Motor neuron (in vitro differentiated cells): ENCODE measurements at regions of chr17 and their contacts with region 1.

Region 1: GRCh38 chr17:13601776-13602551 is at the start of gene HS3ST3A1:
- ATAC-seq: peak; percentile 86 to 91 (median 90)
- H3K4me3 ChIP-seq: peak within 1 kb of the TSS; percentile 47 to 72 (median 58)
- H3K27ac ChIP-seq: no peak within 1 kb of the TSS
- H3K4me1 ChIP-seq: no peaks in the 10 kb centered on the region
- total RNA-seq, gene HS3ST3A1: 2.7 to 50.7 (median 5.3) TPM

Region 2: DNA sequence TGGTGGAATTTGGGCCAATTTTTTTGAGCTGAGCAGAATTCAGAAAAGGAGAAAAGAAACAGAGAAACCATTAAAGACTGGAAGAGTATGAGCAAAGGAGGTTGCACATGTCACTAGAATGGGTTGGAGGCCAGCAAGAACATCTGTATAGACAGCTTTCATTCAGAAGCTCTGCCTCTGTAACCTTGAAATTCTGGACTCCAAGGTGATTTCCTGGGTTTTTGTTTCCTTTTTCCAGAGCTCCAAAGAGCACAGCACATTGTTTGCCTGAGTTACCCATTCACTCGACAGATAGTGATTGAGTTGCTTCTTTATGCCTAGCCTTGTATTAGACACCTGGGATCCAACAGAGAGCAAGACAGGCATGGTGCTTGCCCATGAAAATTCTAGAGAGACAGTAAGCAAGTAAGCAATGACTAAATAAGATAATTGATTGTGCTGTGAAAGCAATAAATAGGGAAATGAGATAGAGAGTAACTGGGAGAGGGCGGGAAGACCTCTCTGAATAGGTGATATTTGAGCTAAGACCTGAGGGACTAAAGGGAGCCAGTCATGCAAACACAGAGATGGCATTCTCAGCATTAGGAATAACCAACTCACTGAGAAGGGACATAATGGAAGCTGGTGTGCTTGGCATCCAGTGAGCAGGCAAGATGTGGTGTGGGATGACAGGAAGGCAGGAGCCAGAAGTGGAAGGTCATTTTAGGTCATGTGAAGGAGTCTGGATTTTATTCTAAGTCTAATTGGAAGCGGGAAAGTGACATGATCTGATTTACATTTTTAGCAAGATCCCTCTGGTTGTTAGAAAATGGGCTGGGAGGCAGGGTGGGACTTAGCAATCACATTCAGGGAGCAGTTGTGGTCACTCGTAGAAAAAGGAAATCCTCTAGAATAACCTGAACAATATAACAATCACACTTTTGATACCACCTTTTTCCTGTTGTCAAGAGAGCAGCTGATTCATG is 197.7 kb before region 1 on chr17:
- in situ Hi-C with region 1: no loop called
- ATAC-seq: peak in 3 of 8 experiments; percentile 31 to 66 (median 34)
- H3K4me3 ChIP-seq: no peak overlapping the region
- H3K27ac ChIP-seq: no peak overlapping the region
- H3K4me1 ChIP-seq: peaks cover 5 to 8% of the 10 kb centered on the region in 2 donors

Region 3: GRCh38 chr17:13704333-13704732 is 102.4 kb after region 1 on chr17:
- in situ Hi-C with region 1: loop called in 1 of 9 experiments (anchors 25 kb)
- ATAC-seq: peak in 2 of 8 experiments; percentile 33 to 56
- H3K4me3 ChIP-seq: no peak overlapping the region
- H3K27ac ChIP-seq: no peak overlapping the region
- H3K4me1 ChIP-seq: no peaks in the 10 kb centered on the region

Region 4: GRCh38 chr17:13931800-13932460 is 330.0 kb after region 1 on chr17:
- in situ Hi-C with region 1: loop called in 1 of 9 experiments (anchors 25 kb)
- ATAC-seq: peak in 3 of 8 experiments; percentile 99
- H3K4me3 ChIP-seq: no peak overlapping the region
- H3K27ac ChIP-seq: no peak overlapping the region
- H3K4me1 ChIP-seq: no peaks in the 10 kb centered on the region

Region 5: GRCh38 chr17:14156689-14157088 is 554.7 kb after region 1 on chr17:
- in situ Hi-C with region 1: no loop called
- ATAC-seq: peak in 1 of 8 experiments; percentile 45
- H3K4me3 ChIP-seq: no peak overlapping the region
- H3K27ac ChIP-seq: no peak overlapping the region
- H3K4me1 ChIP-seq: no peaks in the 10 kb centered on the region

Region 6: GRCh38 chr17:14268264-14268663 is 666.3 kb after region 1 on chr17:
- in situ Hi-C with region 1: loop called in 1 of 9 experiments (anchors 25 kb)
- ATAC-seq: no peak
- H3K4me3 ChIP-seq: no peak overlapping the region
- H3K27ac ChIP-seq: no peak overlapping the region
- H3K4me1 ChIP-seq: no peaks in the 10 kb centered on the region

Region 7: DNA sequence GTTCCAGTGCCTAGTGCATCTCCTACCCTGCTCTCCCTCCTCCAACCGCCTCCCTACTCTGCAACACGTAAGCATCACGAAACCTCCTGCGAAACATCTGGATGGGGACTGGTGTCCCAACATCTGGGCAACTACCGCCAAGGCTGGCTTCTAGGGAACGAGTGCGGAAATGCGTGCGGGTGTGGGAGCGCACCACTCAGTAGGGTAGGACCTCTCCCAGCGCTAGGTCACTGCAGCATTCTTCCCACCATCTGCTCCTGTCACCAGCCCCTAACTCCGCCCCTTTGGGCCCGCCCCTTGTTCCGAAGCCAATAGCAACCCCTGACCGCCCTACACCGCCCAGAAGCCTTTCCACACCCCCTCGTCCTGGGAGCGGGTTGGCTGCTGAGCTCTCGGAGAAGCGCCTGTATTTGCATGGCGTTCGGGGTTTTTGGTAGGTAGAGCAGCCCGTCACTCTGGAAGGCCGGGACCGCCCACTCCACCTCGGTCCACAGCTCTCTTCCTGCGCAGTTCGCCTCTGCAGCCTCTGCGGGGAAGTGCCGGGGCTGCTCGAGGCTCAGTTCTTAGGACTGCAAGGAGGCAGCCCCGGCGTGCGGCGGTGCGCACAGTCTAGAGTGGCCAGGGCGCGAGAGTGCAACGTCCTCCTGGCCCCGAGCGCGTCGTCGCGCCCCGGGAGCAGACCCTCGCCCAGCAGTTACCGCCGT is 698.8 kb after region 1 on chr17 and contains the start of gene HS3ST3B1:
- in situ Hi-C with region 1: loop called in 7 of 9 experiments (anchors 25 kb)
- ATAC-seq: peak; percentile 70 to 92 (median 88)
- H3K4me3 ChIP-seq: peak within 1 kb of the TSS; percentile 48 to 73 (median 59)
- H3K27ac ChIP-seq: peak within 1 kb of the TSS; percentile 12 to 62
- H3K4me1 ChIP-seq: peaks cover 6 to 7% of the 10 kb centered on the region in 2 donors
- total RNA-seq, gene HS3ST3B1: 1.9 to 97.1 (median 6.6) TPM